A549 (cell line): ENCODE measurements at regions of chr16 and their contacts with region 1.

Region 1: DNA sequence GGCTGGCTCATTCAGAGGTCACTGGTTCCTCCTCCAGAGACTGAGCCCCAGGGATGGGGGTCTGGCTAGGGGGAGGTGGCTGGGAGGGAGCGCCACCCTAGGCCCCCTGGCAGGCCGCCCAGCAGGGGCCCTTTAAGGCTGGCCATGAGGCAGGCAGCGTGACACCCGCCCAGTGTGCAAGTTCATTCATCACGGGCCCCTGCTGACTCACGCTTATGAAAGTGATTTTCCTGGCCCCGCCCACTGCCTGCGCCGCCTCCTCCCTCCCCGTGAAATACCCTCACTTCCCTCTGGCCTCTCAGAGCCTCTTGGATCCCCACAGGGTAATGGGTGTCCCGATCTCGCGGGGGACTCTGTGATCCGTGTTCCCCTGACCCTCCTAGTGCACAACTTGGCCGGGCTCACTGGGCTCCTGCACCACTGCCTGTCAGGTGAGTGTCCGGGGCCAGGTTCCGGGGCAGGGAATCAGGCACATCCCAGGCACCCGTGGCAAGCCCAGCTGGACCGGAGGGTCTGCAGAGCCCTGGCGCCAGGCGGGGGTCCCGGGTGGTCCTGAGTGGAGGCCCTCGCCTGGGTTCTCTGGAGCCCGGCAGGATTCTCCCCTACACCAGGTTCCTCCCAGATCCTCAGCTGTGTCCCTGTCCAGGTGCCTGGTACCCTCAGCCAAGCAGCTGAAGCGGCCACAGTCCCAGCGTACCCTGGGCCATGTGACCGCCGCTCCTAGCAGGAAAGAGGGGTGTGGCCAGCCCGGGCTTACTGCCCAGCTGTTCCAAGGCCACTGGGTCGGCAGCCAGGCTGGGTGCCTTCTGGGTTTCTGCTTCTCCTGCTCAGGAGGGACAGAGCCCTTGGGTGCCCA is at the start of gene OSGIN1:
- DNase-seq: peak; percentile 90 to 97
- ATAC-seq: peak; percentile 76 to 84
- H3K4me3 ChIP-seq: peak within 1 kb of the TSS; percentile 67
- H3K27ac ChIP-seq: peak within 1 kb of the TSS; percentile 93 to 98
- H3K4me1 ChIP-seq: peaks cover 38% of the 10 kb centered on the region
- CTCF ChIP-seq: no peak
- EP300 ChIP-seq: peak in 1 of 2 experiments; percentile 60; a peak in 1 of 5 replicates
- POLR2A ChIP-seq: peak; percentile 96
- RAD21 ChIP-seq: no peak
- polyA plus RNA-seq, gene OSGIN1: 23.9 and 25.9 TPM in 2 replicates

Region 2: GRCh38 chr16:83926726-83927397 is 26.3 kb before region 1 on chr16:
- CTCF ChIA-PET with region 1: interaction called, 73 read pairs
- POLR2A ChIA-PET with region 1: interaction called, 6 read pairs
- DNase-seq: peak; percentile 81 to 89
- ATAC-seq: peak; percentile 80 to 94
- H3K4me3 ChIP-seq: peak overlapping the region; percentile 42
- H3K27ac ChIP-seq: peak overlapping the region; percentile 75 to 86
- H3K4me1 ChIP-seq: peaks cover 6% of the 10 kb centered on the region
- CTCF ChIP-seq: peak; percentile 91
- EP300 ChIP-seq: no peak
- POLR2A ChIP-seq: no peak
- RAD21 ChIP-seq: peak; percentile 80 to 86

Region 3: GRCh38 chr16:83964684-83965443 is 11.7 kb after region 1 on chr16:
- CTCF ChIA-PET with region 1: interaction called, 28 read pairs
- POLR2A ChIA-PET with region 1: interaction called, 6 read pairs
- DNase-seq: no peak
- ATAC-seq: peak in 1 of 2 experiments; percentile 8; a peak in 3 of 6 replicates
- H3K4me3 ChIP-seq: no peak overlapping the region
- H3K27ac ChIP-seq: no peak overlapping the region
- H3K4me1 ChIP-seq: no peaks in the 10 kb centered on the region
- CTCF ChIP-seq: no peak
- EP300 ChIP-seq: no peak
- POLR2A ChIP-seq: no peak
- RAD21 ChIP-seq: no peak

Region 4: DNA sequence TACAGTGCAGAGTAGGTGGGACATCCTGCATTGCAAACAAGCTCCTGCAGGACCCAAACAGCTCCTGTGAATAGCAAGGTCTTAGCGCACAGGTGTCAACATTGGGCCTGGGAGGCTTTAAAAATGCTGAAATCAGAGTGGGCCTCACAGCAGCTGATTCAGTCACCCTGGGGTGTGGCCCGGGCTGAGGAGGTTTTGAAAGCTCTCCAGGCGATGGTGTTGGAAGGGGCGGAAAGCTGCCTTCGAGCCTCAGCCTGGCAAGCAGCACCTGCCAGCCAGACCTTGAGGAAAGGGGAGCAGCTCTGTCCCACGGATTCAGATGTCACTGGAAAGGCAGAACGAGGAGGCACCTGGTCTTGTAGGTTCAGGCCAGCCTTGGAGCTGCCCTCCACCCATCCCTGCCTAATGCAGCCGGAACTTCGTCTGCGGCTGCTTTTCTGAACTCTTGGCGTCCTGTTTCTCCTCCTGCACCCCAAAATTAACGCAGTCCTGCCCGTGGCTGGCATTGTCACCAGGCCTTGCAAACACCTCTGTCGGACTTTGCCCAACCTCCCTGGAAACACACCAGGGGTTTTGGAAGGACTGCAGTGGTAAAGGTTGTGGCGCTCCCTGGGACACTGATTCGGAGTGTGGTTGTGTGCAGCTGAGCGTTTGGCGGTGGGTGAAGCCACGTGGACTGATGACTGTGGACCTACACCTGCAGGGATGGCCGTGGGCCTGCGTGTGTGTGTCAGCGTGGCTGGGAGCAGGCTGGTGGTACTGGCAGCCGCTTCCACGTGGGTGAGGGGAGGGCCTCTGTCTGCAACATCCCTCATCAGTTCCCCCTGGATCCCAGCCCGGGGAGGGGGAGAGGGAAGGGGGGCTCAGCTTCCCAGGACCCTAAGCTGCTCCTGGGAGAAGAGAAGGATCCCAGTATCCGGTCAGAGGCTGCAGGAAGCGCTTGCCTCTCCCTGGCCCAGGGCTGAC is 18.3 kb after region 1 on chr16:
- CTCF ChIA-PET with region 1: interaction called, 28 read pairs
- POLR2A ChIA-PET with region 1: no interaction called
- DNase-seq: no peak
- ATAC-seq: no peak
- H3K4me3 ChIP-seq: no peak overlapping the region
- H3K27ac ChIP-seq: no peak overlapping the region
- H3K4me1 ChIP-seq: no peaks in the 10 kb centered on the region
- CTCF ChIP-seq: no peak
- EP300 ChIP-seq: no peak
- POLR2A ChIP-seq: no peak
- RAD21 ChIP-seq: no peak

Region 5: GRCh38 chr16:84044118-84044488 is 90.9 kb after region 1 on chr16:
- CTCF ChIA-PET with region 1: interaction called, 87 read pairs
- POLR2A ChIA-PET with region 1: no interaction called
- DNase-seq: peak; percentile 42 to 53
- ATAC-seq: peak; percentile 61 to 84; a peak in 4 of 6 replicates
- H3K4me3 ChIP-seq: no peak overlapping the region
- H3K27ac ChIP-seq: no peak overlapping the region
- H3K4me1 ChIP-seq: no peaks in the 10 kb centered on the region
- CTCF ChIP-seq: peak; percentile 46; the same call in 2 of the 3 replicates
- EP300 ChIP-seq: no peak
- POLR2A ChIP-seq: no peak
- RAD21 ChIP-seq: peak; percentile 36 to 55; a peak in 4 of 5 replicates